Psoas muscle (tissue), 8 donors: ENCODE measurements at regions of chr1 and their contacts with region 1.

Region 1: DNA sequence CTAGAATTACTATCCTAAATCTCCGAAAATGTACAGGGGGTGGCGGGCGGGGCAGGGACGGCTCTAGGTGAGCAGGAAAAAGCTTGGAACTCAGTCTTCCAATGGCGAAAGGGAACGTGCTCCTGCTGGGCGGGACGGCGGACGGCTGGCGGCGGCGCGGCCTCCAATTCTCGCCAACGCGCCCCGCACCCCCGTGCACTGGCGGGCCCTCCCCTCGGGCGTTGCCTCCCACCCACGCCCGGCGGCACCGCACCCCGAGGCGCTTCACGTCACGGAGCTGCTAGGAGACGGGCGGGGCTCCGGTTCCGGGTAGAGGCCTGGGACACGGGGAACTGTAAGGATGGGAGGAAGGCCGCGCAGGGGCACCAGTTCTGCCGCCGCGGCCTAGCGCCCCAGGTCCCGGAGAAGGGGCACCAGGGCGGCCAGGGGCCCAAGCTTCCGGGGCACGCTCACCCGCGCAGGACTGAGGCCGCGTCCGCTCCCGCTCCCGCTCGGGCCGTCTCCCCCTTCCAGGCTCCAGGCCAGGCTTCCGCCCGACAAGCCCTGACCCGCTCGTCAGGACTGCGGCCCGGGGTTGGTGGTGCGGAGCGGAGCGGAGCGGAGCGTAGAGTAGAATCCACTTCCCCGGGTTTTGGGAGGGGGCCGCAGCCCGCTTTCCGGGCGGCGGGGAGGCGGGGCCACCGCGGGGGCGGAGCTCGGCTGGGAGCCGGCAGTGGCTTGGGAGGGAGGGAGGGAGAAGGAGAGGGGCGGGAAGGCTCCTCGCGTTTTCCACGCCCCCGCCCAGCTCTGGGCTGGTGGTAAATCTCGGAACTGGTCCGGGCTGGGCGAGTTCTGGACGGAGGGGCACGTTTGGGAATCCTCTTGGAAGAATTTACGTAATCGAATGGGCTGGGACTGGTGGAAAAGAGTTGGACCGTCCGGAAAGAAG is at the start of gene DDX59:
- DNase-seq: peak; percentile 96 to 98
- ATAC-seq: peak; percentile 90 to 95 (median 90)
- H3K4me3 ChIP-seq: peak within 1 kb of the TSS; percentile 97
- H3K27ac ChIP-seq: peak within 1 kb of the TSS; percentile 100
- H3K4me1 ChIP-seq: peaks cover 20% of the 10 kb centered on the region
- H3K27me3 ChIP-seq: no peaks in the 10 kb centered on the region
- CTCF ChIP-seq: no peak
- total RNA-seq, gene DDX59: 18.1 to 33.7 (median 29.9) TPM

Region 2: GRCh38 chr1:200302192-200302920 is 367.2 kb before region 1 on chr1:
- intact Hi-C with region 1: no loop called
- DNase-seq: no peak
- ATAC-seq: peak in 3 of 4 donors; percentile 8 to 41 (median 26)
- H3K4me3 ChIP-seq: peak overlapping the region; percentile 75
- H3K27ac ChIP-seq: no peak overlapping the region
- H3K4me1 ChIP-seq: no peaks in the 10 kb centered on the region
- H3K27me3 ChIP-seq: peaks cover 0 to 18% (median 2%) of the 10 kb centered on the region in 3 donors
- CTCF ChIP-seq: no peak

Region 3: GRCh38 chr1:200738740-200739498 is 69.3 kb after region 1 on chr1 and contains the start of gene CAMSAP2:
- intact Hi-C with region 1: loop called (anchors 2 to 5 kb)
- DNase-seq: peak; percentile 89 to 94
- ATAC-seq: peak; percentile 89 to 91 (median 90)
- H3K4me3 ChIP-seq: peak within 1 kb of the TSS; percentile 97
- H3K27ac ChIP-seq: peak within 1 kb of the TSS; percentile 99
- H3K4me1 ChIP-seq: peaks cover 38% of the 10 kb centered on the region
- H3K27me3 ChIP-seq: no peaks in the 10 kb centered on the region
- CTCF ChIP-seq: no peak
- total RNA-seq, gene CAMSAP2: 37.0 to 70.8 (median 49.8) TPM

Region 4: DNA sequence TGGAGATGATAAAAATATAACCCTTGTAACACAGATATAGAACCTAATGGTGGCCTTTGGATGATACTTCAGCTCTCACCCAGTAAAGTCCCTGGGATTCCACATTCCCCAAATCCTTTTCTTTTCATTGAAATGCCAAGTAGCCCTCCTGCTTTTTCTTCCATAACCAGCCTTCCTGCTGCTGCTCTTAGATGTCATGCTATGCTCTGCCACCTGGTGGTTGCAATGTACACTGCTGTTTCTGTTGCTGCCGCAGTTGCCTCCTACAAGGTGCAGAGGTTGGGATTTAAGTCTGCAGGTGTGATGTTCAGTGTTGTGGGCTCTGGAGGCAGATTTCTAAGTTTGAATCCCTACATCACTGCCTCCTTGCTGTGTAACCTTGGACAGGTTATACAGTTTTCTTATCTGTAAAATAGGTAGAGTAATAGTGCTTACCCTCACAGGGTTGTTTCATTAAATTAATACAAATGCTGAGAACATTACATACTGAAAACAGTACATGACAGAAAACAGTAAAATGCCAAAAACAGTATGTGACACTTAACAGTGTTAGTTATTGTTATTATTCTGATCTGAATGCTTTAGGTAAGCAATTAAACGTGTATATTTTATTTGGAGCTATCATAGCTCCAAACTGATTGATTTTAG is 133.4 kb after region 1 on chr1:
- intact Hi-C with region 1: loop called (anchors 5 kb)
- DNase-seq: peak; percentile 58 to 70
- ATAC-seq: peak; percentile 74 to 97 (median 88)
- H3K4me3 ChIP-seq: no peak overlapping the region
- H3K27ac ChIP-seq: no peak overlapping the region
- H3K4me1 ChIP-seq: peaks cover 3% of the 10 kb centered on the region
- H3K27me3 ChIP-seq: no peaks in the 10 kb centered on the region
- CTCF ChIP-seq: peak; percentile 95